ENCODE measurements at regions of chr2 and their contacts with region 1.

Region 1: GRCh38 chr2:157509744-157510143 is 65.9 kb upstream of the CYTIP start:
- ATAC-seq: no peak
- H3K4me3 ChIP-seq: no peak overlapping the region
- H3K27ac ChIP-seq: no peak overlapping the region
- H3K4me1 ChIP-seq: no peaks in the 10 kb centered on the region

Region 2: GRCh38 chr2:157627594-157628476 is 118.1 kb after region 1 on chr2:
- in situ Hi-C with region 1: no loop called
- ATAC-seq: peak in 6 of 8 experiments; percentile 1 to 13 (median 7)
- H3K4me3 ChIP-seq: peak overlapping the region; percentile 37 to 54 (median 44)
- H3K27ac ChIP-seq: no peak overlapping the region
- H3K4me1 ChIP-seq: no peaks in the 10 kb centered on the region

Region 3: DNA sequence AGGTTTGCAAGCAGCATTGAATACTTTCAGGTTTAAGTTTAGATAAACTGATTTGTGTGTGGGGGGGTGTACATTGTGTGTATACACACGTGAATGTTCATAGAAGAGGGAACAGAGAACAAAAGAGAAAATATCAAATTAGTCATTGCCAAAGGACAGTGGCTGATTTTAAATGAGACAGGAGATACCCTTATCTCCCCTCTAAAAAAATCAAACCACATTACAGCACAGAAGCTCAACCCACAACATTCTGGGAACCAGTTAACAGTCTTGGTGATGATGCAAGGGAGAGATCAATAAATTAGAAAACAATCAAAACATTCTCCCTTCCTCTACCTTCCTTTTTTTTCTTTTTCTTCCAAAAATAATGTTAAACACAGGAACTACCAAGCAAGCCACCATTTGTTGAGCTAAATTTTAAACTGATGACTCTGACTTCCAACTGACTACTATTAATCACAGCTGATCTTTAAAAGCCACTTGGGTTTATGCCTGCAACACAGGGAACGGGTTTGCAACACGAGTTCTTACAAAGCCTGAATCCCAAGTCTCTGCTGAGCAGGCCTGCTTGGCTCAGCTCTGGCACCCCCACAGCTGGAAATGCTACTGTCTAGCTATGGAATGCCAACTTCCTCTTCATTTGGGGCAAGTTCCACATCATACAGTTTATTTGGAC is 238.1 kb after region 1 on chr2:
- in situ Hi-C with region 1: loop called in 1 of 9 experiments (anchors 25 kb)
- ATAC-seq: no peak
- H3K4me3 ChIP-seq: no peak overlapping the region
- H3K27ac ChIP-seq: no peak overlapping the region
- H3K4me1 ChIP-seq: no peaks in the 10 kb centered on the region